Activated naive CD4-positive, alpha-beta T cell treated with anti-CD3 and anti-CD28 coated beads, Interleukin-2, amount 10 ng/mL, durations not matched to agents 7 days and 5 days (primary cell): ENCODE measurements at regions of chr12 and their contacts with region 1.

Region 1: DNA sequence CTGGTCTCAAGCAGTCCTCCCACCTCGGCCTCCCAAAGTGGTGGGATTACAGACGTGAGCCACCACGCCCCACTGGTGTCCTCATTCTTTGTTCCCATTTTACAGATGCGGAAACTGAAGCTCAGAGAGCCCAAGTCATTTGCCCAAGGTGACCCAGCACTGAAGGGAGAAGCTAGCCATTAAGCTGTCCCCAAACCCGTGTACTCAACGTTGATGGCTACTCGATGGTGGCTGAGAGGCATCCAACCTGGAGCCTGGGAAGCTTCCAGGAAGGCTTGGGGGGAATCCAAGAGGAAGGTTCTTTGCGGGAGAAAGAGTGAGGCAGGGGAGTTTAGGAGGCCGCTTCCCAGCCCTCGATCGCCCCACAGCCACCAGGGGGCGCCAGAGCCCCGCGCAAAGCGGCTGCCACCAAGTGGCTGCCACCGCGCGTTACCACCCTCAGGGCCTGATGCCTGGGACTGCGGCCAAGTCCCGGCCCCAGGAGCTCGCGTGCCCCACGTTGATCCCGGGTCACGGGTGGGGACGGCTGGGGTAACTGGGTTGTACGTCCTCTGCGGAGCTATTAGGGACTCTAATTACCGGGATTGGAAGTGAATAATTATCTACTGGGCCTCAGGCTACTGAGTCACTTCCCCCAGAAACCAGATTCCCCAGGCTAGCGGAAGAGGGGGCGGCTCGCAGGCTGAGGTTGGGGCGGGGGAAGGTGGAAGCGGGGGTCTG is 8.8 kb upstream of the SH2B3 start:
- DNase-seq: peak; percentile 89
- H3K4me3 Mint-ChIP-seq: peak overlapping the region; percentile 45
- H3K27ac Mint-ChIP-seq: no peak overlapping the region
- H3K4me1 Mint-ChIP-seq: peaks cover 22% of the 10 kb centered on the region
- H3K27me3 Mint-ChIP-seq: peaks cover 21% of the 10 kb centered on the region

Region 2: GRCh38 chr12:111386885-111387284 is 10.0 kb before region 1 on chr12:
- CTCF ChIA-PET with region 1: interaction called, 19 read pairs
- DNase-seq: no peak
- H3K4me3 Mint-ChIP-seq: no peak overlapping the region
- H3K27ac Mint-ChIP-seq: no peak overlapping the region
- H3K4me1 Mint-ChIP-seq: peaks cover 4% of the 10 kb centered on the region
- H3K27me3 Mint-ChIP-seq: peaks cover 35% of the 10 kb centered on the region

Region 3: GRCh38 chr12:111462210-111462769 is 65.4 kb after region 1 on chr12:
- CTCF ChIA-PET with region 1: interaction called, 757 read pairs
- DNase-seq: no peak
- H3K4me3 Mint-ChIP-seq: no peak overlapping the region
- H3K27ac Mint-ChIP-seq: no peak overlapping the region
- H3K4me1 Mint-ChIP-seq: no peaks in the 10 kb centered on the region
- H3K27me3 Mint-ChIP-seq: no peaks in the 10 kb centered on the region

Region 4: DNA sequence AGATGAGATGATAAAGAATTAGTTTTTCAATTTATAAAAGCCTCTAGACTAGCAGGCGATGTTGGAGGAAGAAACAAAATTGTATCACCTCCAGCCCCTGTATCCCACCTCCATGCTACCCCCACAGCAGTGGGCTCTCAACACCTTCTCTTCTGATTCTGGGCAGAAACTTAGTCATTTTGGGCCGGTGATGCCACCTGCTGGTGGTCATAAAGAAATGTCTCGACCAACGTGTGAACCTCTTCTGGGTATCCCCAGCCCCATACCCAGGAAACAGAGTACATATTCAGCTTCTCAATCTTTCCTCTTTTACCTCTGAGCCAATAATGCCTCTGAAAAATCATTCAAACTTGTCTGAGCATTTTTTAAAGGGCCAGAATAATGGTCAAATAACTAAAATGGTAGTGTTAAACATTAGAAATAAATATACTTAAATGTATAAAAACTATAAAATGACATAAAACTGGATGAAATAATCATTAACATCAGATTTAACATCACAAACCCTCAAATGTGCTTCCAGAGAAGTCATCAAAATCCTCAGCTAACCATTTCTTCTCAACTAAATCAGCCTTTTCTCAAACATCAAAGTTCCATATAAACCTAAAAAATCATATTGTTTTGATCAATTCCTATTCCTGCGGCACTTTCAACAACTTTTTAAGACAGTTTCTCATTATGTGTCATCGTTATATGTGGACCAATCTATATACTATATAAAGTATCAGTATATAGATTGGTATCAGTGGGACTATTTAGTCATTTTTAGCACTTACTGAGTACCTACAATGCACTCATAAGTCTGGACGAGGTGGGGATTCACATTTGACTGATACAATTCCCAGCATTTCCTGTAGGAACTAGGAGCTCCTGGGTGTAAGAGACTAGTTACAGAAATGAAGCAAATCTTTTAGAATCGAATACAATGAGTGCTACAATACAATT is 132.8 kb after region 1 on chr12:
- CTCF ChIA-PET with region 1: interaction called, 55 read pairs
- DNase-seq: peak; percentile 73
- H3K4me3 Mint-ChIP-seq: no peak overlapping the region
- H3K27ac Mint-ChIP-seq: no peak overlapping the region
- H3K4me1 Mint-ChIP-seq: no peaks in the 10 kb centered on the region
- H3K27me3 Mint-ChIP-seq: no peaks in the 10 kb centered on the region

Region 5: GRCh38 chr12:111812881-111813741 is 416.2 kb after region 1 on chr12:
- CTCF ChIA-PET with region 1: interaction called, 19 read pairs
- DNase-seq: peak; percentile 78
- H3K4me3 Mint-ChIP-seq: no peak overlapping the region
- H3K27ac Mint-ChIP-seq: no peak overlapping the region
- H3K4me1 Mint-ChIP-seq: peaks cover 9% of the 10 kb centered on the region
- H3K27me3 Mint-ChIP-seq: peaks cover 10% of the 10 kb centered on the region